Activated naive CD4-positive, alpha-beta T cell treated with anti-CD3 and anti-CD28 coated beads for 36 hours (primary cell): ENCODE measurements at regions of chr6 and their contacts with region 1.

Region 1: GRCh38 chr6:159104163-159104925 is 59.6 kb upstream of the TAGAP start:
- DNase-seq: peak; percentile 86
- H3K4me3 Mint-ChIP-seq: no peak overlapping the region
- H3K27ac Mint-ChIP-seq: peak overlapping the region; percentile 86
- H3K4me1 Mint-ChIP-seq: peaks cover 81% of the 10 kb centered on the region
- H3K27me3 Mint-ChIP-seq: no peaks in the 10 kb centered on the region

Region 2: DNA sequence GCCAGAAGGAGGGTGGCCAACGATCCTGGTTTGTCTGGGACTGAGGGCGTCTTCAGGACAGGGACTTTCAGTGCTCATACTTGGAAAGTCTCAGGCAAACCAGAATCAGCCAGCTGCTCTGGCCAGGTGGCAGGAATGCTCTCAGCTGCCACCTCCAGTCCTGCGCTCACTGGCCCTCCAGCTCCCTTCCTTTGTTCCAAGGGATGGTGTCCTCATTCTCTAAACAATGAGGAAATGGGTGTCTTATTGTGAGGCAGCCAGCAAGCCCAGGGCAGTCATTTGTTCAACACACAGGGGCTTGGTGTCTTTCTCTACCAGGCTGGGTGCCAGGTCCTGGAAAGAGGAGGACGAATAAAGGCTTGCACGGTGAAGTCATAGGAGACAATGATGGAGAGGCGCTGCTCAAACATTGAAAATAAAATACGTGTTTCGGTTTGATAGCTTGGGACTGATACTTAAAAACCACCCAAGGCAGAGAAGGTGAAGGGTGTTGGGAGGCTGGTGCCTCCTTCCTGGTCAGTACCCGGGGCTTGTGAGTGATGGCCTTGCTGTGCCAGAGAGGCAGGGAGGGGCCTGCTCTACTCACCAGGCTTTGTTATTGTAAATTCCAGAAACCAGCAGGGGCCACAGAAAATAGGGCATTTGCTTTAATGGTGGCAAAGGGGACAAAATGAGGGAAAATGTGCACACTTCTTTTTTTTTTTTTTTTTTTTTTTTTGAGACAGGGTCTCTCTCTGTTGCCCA is 555.8 kb before region 1 on chr6:
- CTCF ChIA-PET with region 1: no interaction called
- intact Hi-C with region 1: no loop called
- DNase-seq: no peak
- H3K4me3 Mint-ChIP-seq: no peak overlapping the region
- H3K27ac Mint-ChIP-seq: no peak overlapping the region
- H3K4me1 Mint-ChIP-seq: no peaks in the 10 kb centered on the region
- H3K27me3 Mint-ChIP-seq: no peaks in the 10 kb centered on the region

Region 3: DNA sequence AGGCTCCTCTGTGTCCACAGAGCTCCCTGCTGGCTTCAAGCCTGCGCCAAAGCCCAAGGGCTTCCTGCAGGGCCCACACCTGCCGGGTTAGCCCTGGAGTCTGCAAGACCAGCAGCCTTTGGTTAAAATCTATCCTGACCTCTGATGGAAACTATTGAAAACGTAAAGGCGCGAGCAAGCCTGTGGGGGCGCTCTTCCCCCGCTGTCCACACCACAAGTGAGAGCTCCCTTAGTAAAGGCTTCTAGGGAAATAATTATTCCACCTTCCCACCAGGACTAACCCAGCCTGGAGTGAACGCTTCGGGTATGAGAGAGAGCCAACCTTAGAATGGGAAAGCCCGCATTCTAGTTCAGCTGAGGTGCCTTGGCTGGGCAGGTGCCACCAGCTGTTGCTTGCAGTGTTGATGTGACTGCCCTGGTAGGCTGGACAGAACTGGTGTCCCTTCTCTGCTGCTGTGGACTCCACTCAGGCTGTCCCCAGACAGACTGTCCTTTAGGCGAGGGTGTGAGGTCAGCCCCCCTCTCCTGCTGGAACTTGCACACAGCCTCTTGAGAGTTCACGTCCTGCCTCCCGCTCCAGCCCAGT is 385.8 kb before region 1 on chr6:
- CTCF ChIA-PET with region 1: no interaction called
- intact Hi-C with region 1: loop called (anchors 5 kb)
- DNase-seq: no peak
- H3K4me3 Mint-ChIP-seq: no peak overlapping the region
- H3K27ac Mint-ChIP-seq: no peak overlapping the region
- H3K4me1 Mint-ChIP-seq: peaks cover 37% of the 10 kb centered on the region
- H3K27me3 Mint-ChIP-seq: no peaks in the 10 kb centered on the region

Region 4: GRCh38 chr6:158853072-158853871 is 251.1 kb before region 1 on chr6:
- CTCF ChIA-PET with region 1: no interaction called
- intact Hi-C with region 1: loop called (anchors 5 kb)
- DNase-seq: peak; percentile 95
- H3K4me3 Mint-ChIP-seq: no peak overlapping the region
- H3K27ac Mint-ChIP-seq: no peak overlapping the region
- H3K4me1 Mint-ChIP-seq: peaks cover 29% of the 10 kb centered on the region
- H3K27me3 Mint-ChIP-seq: no peaks in the 10 kb centered on the region

Region 5: GRCh38 chr6:159008656-159009288 is 95.6 kb before region 1 on chr6:
- CTCF ChIA-PET with region 1: interaction called, 139 read pairs
- intact Hi-C with region 1: loop called (anchors 1 kb)
- DNase-seq: no peak
- H3K4me3 Mint-ChIP-seq: no peak overlapping the region
- H3K27ac Mint-ChIP-seq: no peak overlapping the region
- H3K4me1 Mint-ChIP-seq: peaks cover 29% of the 10 kb centered on the region
- H3K27me3 Mint-ChIP-seq: no peaks in the 10 kb centered on the region

Region 6: DNA sequence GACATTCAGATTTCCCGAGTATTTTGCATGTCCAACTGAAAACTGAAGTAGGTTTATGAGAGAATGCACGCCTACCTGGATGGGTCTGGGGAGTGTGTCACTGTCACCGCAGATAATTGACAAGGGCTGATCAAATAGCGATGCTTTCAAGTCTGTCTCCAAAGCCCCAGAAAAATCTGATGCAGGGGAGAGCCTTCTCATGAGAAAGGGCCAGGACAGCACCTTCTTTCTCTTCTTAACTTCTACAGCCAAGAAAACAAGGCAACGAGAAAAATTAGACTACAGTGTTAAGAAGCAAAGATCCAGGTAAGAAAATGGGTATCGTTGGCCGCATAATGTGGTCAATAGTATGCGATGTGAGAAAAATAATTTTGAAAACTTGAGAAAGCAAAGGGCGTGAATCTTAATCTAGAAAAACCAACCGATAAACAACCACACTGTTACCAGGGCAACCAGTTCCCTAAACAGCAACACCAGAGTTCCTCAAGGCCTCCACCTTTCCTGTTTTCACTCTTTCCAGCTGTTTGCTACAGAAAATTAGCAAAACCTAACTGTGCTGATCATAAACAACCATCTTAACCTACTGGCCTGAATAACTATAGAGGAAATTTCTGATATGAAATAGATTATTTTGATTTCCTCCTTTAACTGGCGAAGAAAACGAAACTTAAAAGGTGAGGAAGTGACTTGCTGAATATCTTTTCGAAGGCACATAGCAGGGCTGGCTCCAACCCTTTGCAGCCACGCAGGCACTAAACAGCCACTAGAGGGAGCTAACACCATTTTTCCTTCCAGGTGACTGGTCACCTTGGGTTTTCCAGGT is 62.1 kb before region 1 on chr6:
- CTCF ChIA-PET with region 1: interaction called, 113 read pairs
- intact Hi-C with region 1: loop called (anchors 1 kb)
- DNase-seq: peak; percentile 86
- H3K4me3 Mint-ChIP-seq: peak overlapping the region; percentile 96
- H3K27ac Mint-ChIP-seq: peak overlapping the region; percentile 98
- H3K4me1 Mint-ChIP-seq: peaks cover 69% of the 10 kb centered on the region
- H3K27me3 Mint-ChIP-seq: no peaks in the 10 kb centered on the region

Region 7: GRCh38 chr6:159134701-159135364 is 30.5 kb after region 1 on chr6:
- CTCF ChIA-PET with region 1: interaction called, 58 read pairs
- intact Hi-C with region 1: loop called (anchors 2 kb)
- DNase-seq: peak; percentile 89
- H3K4me3 Mint-ChIP-seq: no peak overlapping the region
- H3K27ac Mint-ChIP-seq: no peak overlapping the region
- H3K4me1 Mint-ChIP-seq: no peaks in the 10 kb centered on the region
- H3K27me3 Mint-ChIP-seq: peaks cover 5% of the 10 kb centered on the region